Motor neuron (in vitro differentiated cells): ENCODE measurements at regions of chr18 and their contacts with region 1.

Region 1: GRCh38 chr18:46622999-46623398 is 34.0 kb downstream of the LOXHD1 start:
- ATAC-seq: peak in 7 of 8 experiments; percentile 33 to 72 (median 38)
- H3K4me3 ChIP-seq: no peak overlapping the region
- H3K27ac ChIP-seq: no peak overlapping the region
- H3K4me1 ChIP-seq: no peaks in the 10 kb centered on the region

Region 2: GRCh38 chr18:45962461-45962860 is 660.5 kb before region 1 on chr18:
- in situ Hi-C with region 1: no loop called
- ATAC-seq: no peak
- H3K4me3 ChIP-seq: no peak overlapping the region
- H3K27ac ChIP-seq: no peak overlapping the region
- H3K4me1 ChIP-seq: peaks cover 3 to 6% of the 10 kb centered on the region in 2 donors

Region 3: DNA sequence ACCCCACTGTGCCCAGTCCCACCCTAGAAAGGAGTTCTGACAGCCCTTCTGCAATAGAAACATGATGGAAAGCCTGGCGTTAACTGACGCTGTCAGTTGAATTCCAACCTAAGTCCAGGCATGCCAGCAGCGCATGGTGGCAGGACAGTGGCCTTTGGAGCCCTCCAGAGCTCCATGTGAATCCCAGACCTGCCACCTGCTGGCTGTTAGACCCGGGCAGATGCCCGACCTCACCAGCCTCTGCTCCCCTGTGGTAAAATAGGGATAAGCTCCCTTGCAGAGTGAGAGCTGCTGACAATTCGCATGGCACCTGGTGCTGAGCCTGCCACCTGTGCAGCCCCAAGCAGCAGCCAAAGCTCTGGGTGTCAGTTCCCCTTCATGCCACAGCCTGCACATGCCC is 104.6 kb before region 1 on chr18:
- in situ Hi-C with region 1: loop called in 1 of 9 experiments (anchors 25 kb)
- ATAC-seq: peak in 2 of 8 experiments; percentile 25 to 59
- H3K4me3 ChIP-seq: no peak overlapping the region
- H3K27ac ChIP-seq: no peak overlapping the region
- H3K4me1 ChIP-seq: no peaks in the 10 kb centered on the region